Activated T-helper 1 cell treated with anti-CD3 and anti-CD28 coated beads, Interleukin-12 subunit alpha, Interleukin-12 subunit beta, Interleukin-2, Interleukin-4 antibody, amounts not matched to agents 30 ng/mL and 10 ng/mL and 1 ng/mL, durations not matched to agents 14 hours and 24 hours and 36 hours (primary cell): ENCODE measurements at regions of chr5 and their contacts with region 1.

Region 1: GRCh38 chr5:69166686-69167492 is at the start of gene CCNB1:
- DNase-seq: peak; percentile 99
- H3K4me3 Mint-ChIP-seq: peak within 1 kb of the TSS; percentile 90
- H3K27ac Mint-ChIP-seq: peak within 1 kb of the TSS; percentile 83
- H3K4me1 Mint-ChIP-seq: peaks cover 45% of the 10 kb centered on the region
- H3K27me3 Mint-ChIP-seq: no peaks in the 10 kb centered on the region
- total RNA-seq, gene CCNB1: 106 and 115 TPM in 2 replicates

Region 2: DNA sequence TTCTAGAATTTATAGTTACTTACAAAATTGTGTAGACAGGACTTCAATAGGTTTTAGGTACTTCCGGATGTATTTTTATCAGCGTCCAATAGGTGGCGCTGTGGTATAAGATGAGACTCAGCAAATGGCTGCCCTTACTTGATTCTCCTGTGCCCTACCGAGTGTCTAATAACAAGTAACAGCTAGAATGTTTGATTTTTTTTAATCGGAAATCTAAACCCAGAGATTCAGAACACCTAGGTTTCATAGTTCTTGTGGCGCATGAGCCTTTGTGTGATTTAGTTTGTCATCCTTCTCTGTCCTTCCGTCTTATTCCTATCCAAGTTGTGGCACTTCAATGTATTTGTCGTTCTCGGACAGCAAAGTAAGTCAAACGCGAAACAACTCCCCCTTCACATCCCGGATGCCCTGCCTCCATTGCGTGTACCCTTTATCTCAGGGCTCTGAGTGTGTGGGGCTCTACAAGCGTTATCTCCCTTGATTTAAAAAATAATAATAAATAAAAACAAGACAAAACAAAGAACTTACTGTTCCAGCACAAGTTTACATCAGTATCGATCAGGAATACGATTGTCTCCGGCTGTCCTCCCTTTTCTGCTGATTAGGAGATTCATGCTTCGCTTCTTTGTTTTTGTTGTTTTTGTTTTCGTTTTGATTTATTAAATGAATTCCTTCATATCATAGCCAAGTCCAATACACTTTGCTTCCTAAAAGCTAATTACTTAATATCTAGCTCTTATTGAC is 123.8 kb before region 1 on chr5:
- intact Hi-C with region 1: loop called (anchors 1 kb)
- DNase-seq: peak; percentile 75
- H3K4me3 Mint-ChIP-seq: peak overlapping the region; percentile 84
- H3K27ac Mint-ChIP-seq: peak overlapping the region; percentile 56
- H3K4me1 Mint-ChIP-seq: peaks cover 5% of the 10 kb centered on the region
- H3K27me3 Mint-ChIP-seq: peaks cover 3% of the 10 kb centered on the region

Region 3: GRCh38 chr5:69189162-69190086 is 22.5 kb after region 1 on chr5 and contains the start of gene CENPH:
- intact Hi-C with region 1: loop called (anchors 1 kb)
- DNase-seq: peak; percentile 92
- H3K4me3 Mint-ChIP-seq: peak within 1 kb of the TSS; percentile 94
- H3K27ac Mint-ChIP-seq: peak within 1 kb of the TSS; percentile 98
- H3K4me1 Mint-ChIP-seq: peaks cover 16% of the 10 kb centered on the region
- H3K27me3 Mint-ChIP-seq: no peaks in the 10 kb centered on the region
- total RNA-seq, gene CENPH: 32.3 and 35.5 TPM in 2 replicates

Region 4: GRCh38 chr5:69234457-69235268 is 67.8 kb after region 1 on chr5 and contains the start of gene CDK7:
- intact Hi-C with region 1: loop called (anchors 1 kb)
- DNase-seq: peak; percentile 92
- H3K4me3 Mint-ChIP-seq: peak within 1 kb of the TSS; percentile 97
- H3K27ac Mint-ChIP-seq: peak within 1 kb of the TSS; percentile 84
- H3K4me1 Mint-ChIP-seq: peaks cover 43% of the 10 kb centered on the region
- H3K27me3 Mint-ChIP-seq: no peaks in the 10 kb centered on the region
- total RNA-seq, gene CDK7: 42.4 and 49.2 TPM in 2 replicates

Region 5: DNA sequence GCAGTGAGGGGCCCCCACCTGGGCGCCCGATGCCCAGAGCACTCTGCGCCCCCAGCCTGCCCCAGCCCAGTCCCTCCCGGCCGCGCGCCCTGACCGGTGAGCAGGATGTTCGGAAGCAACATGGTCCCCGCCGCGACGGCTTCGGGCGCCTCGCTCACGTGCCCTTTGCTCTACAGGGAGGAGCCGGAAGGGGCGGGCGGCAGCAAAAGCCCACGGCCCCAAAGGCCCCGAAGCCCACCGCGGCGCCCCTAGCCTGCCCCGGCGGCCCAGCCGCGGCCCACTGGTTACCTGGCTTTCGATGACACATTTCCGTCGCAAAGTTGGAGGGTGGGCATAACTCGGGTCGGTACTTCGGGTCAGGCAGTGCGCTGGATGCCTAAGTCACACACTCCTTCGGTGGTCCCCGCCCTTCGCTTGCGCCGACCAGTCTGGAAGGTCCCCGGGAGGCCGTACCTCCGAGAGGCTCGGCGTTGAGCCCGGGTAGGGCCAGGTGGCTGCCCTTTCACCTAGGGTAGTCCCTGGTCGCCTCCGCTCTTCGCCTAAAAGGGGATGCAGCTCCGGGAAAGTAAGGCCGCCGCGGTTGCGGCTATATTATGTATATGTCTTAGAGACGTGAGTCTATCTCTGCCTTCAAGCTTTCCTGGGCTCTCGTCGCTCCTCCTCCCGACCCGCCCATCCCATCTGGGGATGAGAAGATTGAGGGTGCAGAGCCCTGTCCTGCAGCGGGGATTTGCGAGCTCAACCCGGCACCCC is 202.7 kb after region 1 on chr5 and contains the starts of genes AK6, RAD17 and TAF9:
- intact Hi-C with region 1: loop called (anchors 1 kb)
- DNase-seq: peak; percentile 87
- H3K4me3 Mint-ChIP-seq: peak within 1 kb of the TSS; percentile 98
- H3K27ac Mint-ChIP-seq: peak within 1 kb of the TSS; percentile 98
- H3K4me1 Mint-ChIP-seq: peaks cover 36% of the 10 kb centered on the region
- H3K27me3 Mint-ChIP-seq: no peaks in the 10 kb centered on the region
- total RNA-seq, gene AK6: 59.0 and 62.3 TPM in 2 replicates
- total RNA-seq, gene RAD17: 22.0 and 26.9 TPM in 2 replicates
- total RNA-seq, gene TAF9: 60.0 and 65.0 TPM in 2 replicates

Region 6: GRCh38 chr5:69528048-69528447 is 361.2 kb after region 1 on chr5:
- intact Hi-C with region 1: no loop called
- DNase-seq: no peak
- H3K4me3 Mint-ChIP-seq: no peak overlapping the region
- H3K27ac Mint-ChIP-seq: no peak overlapping the region
- H3K4me1 Mint-ChIP-seq: no peaks in the 10 kb centered on the region
- H3K27me3 Mint-ChIP-seq: peaks cover 5% of the 10 kb centered on the region